ENCODE measurements at regions of chr10 and their contacts with region 1.

Region 1: GRCh38 chr10:74826142-74827044 is at the start of gene KAT6B:
- DNase-seq: peak; percentile 98
- ATAC-seq: peak; percentile 81
- H3K4me3 Mint-ChIP-seq: peak within 1 kb of the TSS; percentile 88
- H3K27ac Mint-ChIP-seq: peak within 1 kb of the TSS; percentile 96
- H3K4me1 Mint-ChIP-seq: peaks cover 44% of the 10 kb centered on the region
- H3K27me3 Mint-ChIP-seq: no peaks in the 10 kb centered on the region
- CTCF ChIP-seq: no peak
- total RNA-seq, gene KAT6B: 39.6 and 45.2 TPM in 2 replicates

Region 2: DNA sequence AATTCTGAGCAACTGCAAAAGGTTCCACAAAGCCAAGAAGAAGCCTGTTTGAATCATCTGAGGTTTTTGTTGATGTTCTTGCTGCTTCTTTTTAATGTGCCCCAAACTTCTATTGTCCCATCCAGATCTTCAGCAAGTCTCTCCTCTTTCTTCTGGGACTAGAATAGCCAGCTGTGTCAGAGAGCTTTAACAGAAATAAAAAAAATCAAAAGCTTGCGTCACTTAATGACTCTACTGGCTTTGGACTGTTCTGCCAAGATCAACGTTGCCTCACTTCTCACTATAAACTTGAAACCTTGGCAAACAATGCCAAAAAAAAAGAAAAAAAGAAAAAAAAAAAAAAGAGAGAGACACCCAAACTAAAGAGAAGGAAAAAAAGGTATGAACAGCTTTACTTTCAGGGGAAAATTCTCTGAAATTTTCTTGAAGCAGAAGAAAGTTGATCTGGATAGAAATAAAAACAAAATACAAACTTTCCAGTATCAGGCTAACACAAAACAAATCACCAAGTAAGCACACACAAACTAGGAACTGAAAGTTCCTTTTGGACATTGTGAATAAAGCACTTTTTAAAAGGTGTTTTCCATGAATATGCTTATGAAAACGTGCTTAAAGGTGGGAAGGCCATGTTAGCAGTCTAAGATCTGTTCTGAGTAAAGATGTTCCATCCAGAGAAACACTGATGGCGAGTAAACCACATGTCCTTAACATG is 1250.1 kb before region 1 on chr10:
- CTCF ChIA-PET with region 1: no interaction called
- POLR2A ChIA-PET with region 1: no interaction called
- intact Hi-C with region 1: no loop called
- DNase-seq: no peak
- ATAC-seq: no peak
- H3K4me3 Mint-ChIP-seq: no peak overlapping the region
- H3K27ac Mint-ChIP-seq: no peak overlapping the region
- H3K4me1 Mint-ChIP-seq: no peaks in the 10 kb centered on the region
- H3K27me3 Mint-ChIP-seq: no peaks in the 10 kb centered on the region
- CTCF ChIP-seq: no peak

Region 3: GRCh38 chr10:73879296-73880173 is 946.9 kb before region 1 on chr10:
- CTCF ChIA-PET with region 1: no interaction called
- POLR2A ChIA-PET with region 1: interaction called, 3 read pairs
- intact Hi-C with region 1: loop called (anchors 10 kb)
- DNase-seq: peak; percentile 86
- ATAC-seq: peak; percentile 96
- H3K4me3 Mint-ChIP-seq: no peak overlapping the region
- H3K27ac Mint-ChIP-seq: peak overlapping the region; percentile 67
- H3K4me1 Mint-ChIP-seq: peaks cover 22% of the 10 kb centered on the region
- H3K27me3 Mint-ChIP-seq: no peaks in the 10 kb centered on the region
- CTCF ChIP-seq: no peak

Region 4: DNA sequence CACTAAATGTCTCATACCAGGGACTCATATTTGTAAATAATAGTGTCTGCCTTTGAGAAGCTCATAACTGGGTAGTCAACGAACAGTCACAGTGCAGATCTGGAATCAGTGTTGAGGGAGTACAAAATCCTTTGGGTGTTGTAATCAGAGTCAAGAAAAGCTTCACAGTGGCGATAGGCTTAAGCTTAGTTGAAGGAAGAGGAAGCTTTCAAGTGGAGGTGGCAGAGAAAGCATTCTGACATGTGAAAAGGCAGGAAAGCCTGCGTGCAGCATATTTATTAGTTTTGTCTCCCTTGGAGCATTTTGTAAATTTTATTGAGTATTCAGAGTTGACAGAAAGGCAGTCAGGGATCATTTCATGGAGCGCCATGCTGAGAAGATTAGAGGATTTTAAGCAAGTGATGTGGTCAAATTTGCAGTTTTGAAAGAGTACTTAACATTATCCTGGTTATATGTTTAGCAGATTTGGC is 570.5 kb before region 1 on chr10:
- CTCF ChIA-PET with region 1: no interaction called
- POLR2A ChIA-PET with region 1: interaction called, 11 read pairs
- intact Hi-C with region 1: loop called (anchors 10 kb)
- DNase-seq: no peak
- ATAC-seq: no peak
- H3K4me3 Mint-ChIP-seq: no peak overlapping the region
- H3K27ac Mint-ChIP-seq: peak overlapping the region; percentile 68
- H3K4me1 Mint-ChIP-seq: peaks cover 42% of the 10 kb centered on the region
- H3K27me3 Mint-ChIP-seq: no peaks in the 10 kb centered on the region
- CTCF ChIP-seq: no peak

Region 5: GRCh38 chr10:74797550-74797949 is 28.8 kb before region 1 on chr10:
- CTCF ChIA-PET with region 1: no interaction called
- POLR2A ChIA-PET with region 1: interaction called, 9 read pairs
- intact Hi-C with region 1: loop called (anchors 2 kb)
- DNase-seq: no peak
- ATAC-seq: no peak
- H3K4me3 Mint-ChIP-seq: no peak overlapping the region
- H3K27ac Mint-ChIP-seq: no peak overlapping the region
- H3K4me1 Mint-ChIP-seq: peaks cover 27% of the 10 kb centered on the region
- H3K27me3 Mint-ChIP-seq: peaks cover 10% of the 10 kb centered on the region
- CTCF ChIP-seq: no peak

Region 6: GRCh38 chr10:75019370-75019769 is 193.0 kb after region 1 on chr10:
- CTCF ChIA-PET with region 1: no interaction called
- POLR2A ChIA-PET with region 1: interaction called, 9 read pairs
- intact Hi-C with region 1: loop called (anchors 2 kb)
- DNase-seq: no peak
- ATAC-seq: peak; percentile 41
- H3K4me3 Mint-ChIP-seq: no peak overlapping the region
- H3K27ac Mint-ChIP-seq: no peak overlapping the region
- H3K4me1 Mint-ChIP-seq: peaks cover 13% of the 10 kb centered on the region
- H3K27me3 Mint-ChIP-seq: no peaks in the 10 kb centered on the region
- CTCF ChIP-seq: no peak

Measured in activated B cell treated with CpG ODN at 0.5 μM for 24 hours (primary cell).